Activated T-helper 2 cell treated with anti-CD3 and anti-CD28 coated beads, Interferon-gamma antibody, Interleukin-2, Interleukin-4, amounts not matched to agents 10 μg/mL and 5 μg/mL and 100 μg/mL, durations not matched to agents 14 hours and 24 hours and 36 hours (primary cell): ENCODE measurements at regions of chr17 and their contacts with region 1.

Region 1: GRCh38 chr17:57858838-57859237 is 9.0 kb upstream of the MRPS23 start:
- DNase-seq: no peak
- H3K4me3 Mint-ChIP-seq: no peak overlapping the region
- H3K27ac Mint-ChIP-seq: no peak overlapping the region
- H3K4me1 Mint-ChIP-seq: peaks cover 10% of the 10 kb centered on the region
- H3K27me3 Mint-ChIP-seq: peaks cover 43% of the 10 kb centered on the region

Region 2: GRCh38 chr17:57211543-57211942 is 647.3 kb before region 1 on chr17:
- intact Hi-C with region 1: no loop called
- DNase-seq: no peak
- H3K4me3 Mint-ChIP-seq: no peak overlapping the region
- H3K27ac Mint-ChIP-seq: no peak overlapping the region
- H3K4me1 Mint-ChIP-seq: no peaks in the 10 kb centered on the region
- H3K27me3 Mint-ChIP-seq: peaks cover 8% of the 10 kb centered on the region

Region 3: GRCh38 chr17:58112970-58113631 is 254.3 kb after region 1 on chr17:
- intact Hi-C with region 1: loop called (anchors 1 kb)
- DNase-seq: peak; percentile 71
- H3K4me3 Mint-ChIP-seq: no peak overlapping the region
- H3K27ac Mint-ChIP-seq: no peak overlapping the region
- H3K4me1 Mint-ChIP-seq: no peaks in the 10 kb centered on the region
- H3K27me3 Mint-ChIP-seq: peaks cover 10% of the 10 kb centered on the region